CD4-positive, alpha-beta memory T cell (primary cell): ENCODE measurements at regions of chr2 and their contacts with region 1.

Region 1: GRCh38 chr2:37389989-37390765 is 45.7 kb downstream of the QPCT start:
- DNase-seq: peak; percentile 61 to 90 (median 66)
- H3K4me3 ChIP-seq: peak overlapping the region in 1 of 2 donors; percentile 4
- H3K4me3 Mint-ChIP-seq: peak overlapping the region; percentile 28 to 78 (median 57)
- H3K27ac ChIP-seq: peak overlapping the region; percentile 38
- H3K27ac Mint-ChIP-seq: peak overlapping the region in 4 of 7 donors; percentile 62 to 94 (median 88)
- H3K4me1 ChIP-seq: peaks cover 29% of the 10 kb centered on the region
- H3K4me1 Mint-ChIP-seq: peaks cover 2 to 7% (median 3%) of the 10 kb centered on the region in 4 donors
- H3K27me3 ChIP-seq: no peaks in the 10 kb centered on the region
- H3K27me3 Mint-ChIP-seq: no peaks in the 10 kb centered on the region

Region 2: DNA sequence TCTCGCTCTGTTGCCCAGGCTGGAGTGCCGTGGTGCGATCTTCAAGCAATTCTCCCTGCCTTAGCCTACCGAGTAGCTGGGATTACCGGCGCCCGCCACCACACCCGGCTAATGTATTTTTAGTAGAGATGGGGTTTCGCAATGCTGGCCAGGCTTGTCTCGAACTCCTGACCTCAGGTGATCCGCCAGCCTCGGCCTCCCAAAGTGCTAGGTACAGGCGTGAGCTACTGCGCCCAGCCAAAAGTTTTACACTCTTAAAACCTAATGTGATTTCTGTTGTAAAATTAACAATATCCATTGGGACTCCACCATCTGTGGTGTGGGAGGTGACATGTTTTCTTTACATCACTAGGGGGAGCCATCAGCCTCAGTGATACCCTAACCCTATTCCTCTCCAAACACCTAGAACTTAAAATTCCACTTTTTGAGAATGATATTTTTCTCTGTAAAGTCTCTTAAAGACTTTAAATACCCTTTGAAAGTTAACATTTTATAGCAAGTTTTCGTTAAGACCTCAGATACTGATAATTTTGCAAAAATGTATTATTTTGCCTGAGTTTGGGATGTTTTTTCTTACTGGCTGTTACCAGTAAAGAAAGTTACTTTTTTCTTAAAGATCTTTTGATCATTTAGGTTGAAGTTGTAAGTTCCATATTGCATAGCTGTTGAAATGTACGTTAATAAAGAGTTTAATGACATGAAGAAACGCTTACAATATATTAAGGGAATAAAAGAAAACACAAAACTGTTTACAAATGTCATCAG is 221.8 kb before region 1 on chr2:
- CTCF ChIA-PET with region 1: interaction called, 8 read pairs
- POLR2A ChIA-PET with region 1: no interaction called
- intact Hi-C with region 1: loop called (anchors 10 kb)
- DNase-seq: peak in 4 of 5 donors; percentile 32 to 45 (median 36)
- H3K4me3 ChIP-seq: no peak overlapping the region
- H3K4me3 Mint-ChIP-seq: no peak overlapping the region
- H3K27ac ChIP-seq: no peak overlapping the region
- H3K27ac Mint-ChIP-seq: no peak overlapping the region
- H3K4me1 ChIP-seq: no peaks in the 10 kb centered on the region
- H3K4me1 Mint-ChIP-seq: no peaks in the 10 kb centered on the region
- H3K27me3 ChIP-seq: no peaks in the 10 kb centered on the region
- H3K27me3 Mint-ChIP-seq: no peaks in the 10 kb centered on the region

Region 3: GRCh38 chr2:37244017-37244416 is 146.2 kb before region 1 on chr2:
- CTCF ChIA-PET with region 1: no interaction called
- POLR2A ChIA-PET with region 1: no interaction called
- intact Hi-C with region 1: no loop called
- DNase-seq: peak in 3 of 5 donors; percentile 6 to 22 (median 16)
- H3K4me3 ChIP-seq: no peak overlapping the region
- H3K4me3 Mint-ChIP-seq: peak overlapping the region in 4 of 8 donors; percentile 22 to 64 (median 50)
- H3K27ac ChIP-seq: peak overlapping the region; percentile 54
- H3K27ac Mint-ChIP-seq: peak overlapping the region in 6 of 7 donors; percentile 62 to 96 (median 88)
- H3K4me1 ChIP-seq: peaks cover 22% of the 10 kb centered on the region
- H3K4me1 Mint-ChIP-seq: peaks cover 8 to 31% (median 24%) of the 10 kb centered on the region in 4 donors
- H3K27me3 ChIP-seq: no peaks in the 10 kb centered on the region
- H3K27me3 Mint-ChIP-seq: no peaks in the 10 kb centered on the region

Region 4: DNA sequence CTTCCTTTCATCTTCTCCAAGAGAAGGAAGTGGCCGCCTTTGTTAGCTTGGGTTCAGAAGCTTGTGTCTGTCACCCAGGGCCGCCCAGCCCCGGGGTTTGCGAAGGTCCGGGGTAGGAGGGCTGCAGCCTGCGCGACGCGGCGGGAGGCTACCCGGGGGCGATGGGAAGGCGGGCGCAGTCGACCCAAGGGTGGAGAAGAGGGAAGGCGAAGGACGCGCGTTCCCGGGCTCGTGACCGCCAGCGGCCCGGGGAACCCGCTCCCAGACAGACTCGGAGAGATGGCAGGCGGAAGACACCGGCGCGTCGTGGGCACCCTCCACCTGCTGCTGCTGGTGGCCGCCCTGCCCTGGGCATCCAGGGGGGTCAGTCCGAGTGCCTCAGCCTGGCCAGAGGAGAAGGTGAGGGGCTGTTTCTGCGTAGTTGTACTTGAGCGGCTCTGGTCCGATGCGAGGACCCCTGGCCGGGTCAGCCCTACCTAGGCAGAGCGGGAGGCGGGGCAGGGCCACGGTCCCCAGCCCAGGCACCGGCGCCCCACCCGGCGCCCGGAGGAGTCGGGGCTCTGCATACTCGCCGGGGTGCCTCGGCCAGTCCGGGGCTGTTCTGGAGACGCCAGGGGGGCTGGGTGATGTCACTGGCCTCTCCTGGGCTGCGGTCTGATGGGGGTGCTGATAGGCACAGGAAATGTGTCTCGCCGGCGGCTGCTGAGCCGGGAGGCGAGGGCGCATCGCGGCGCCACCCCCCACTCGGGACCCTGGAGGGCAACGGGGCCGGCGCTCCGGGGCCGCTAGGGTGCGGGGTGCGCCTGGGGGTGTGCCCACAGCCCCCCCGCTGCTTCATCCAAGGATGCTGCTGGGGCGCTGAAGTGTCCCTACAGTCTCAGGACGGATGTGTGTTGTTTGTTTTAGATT is 45.5 kb before region 1 on chr2 and contains the start of gene QPCT:
- CTCF ChIA-PET with region 1: interaction called, 5 read pairs
- POLR2A ChIA-PET with region 1: no interaction called
- intact Hi-C with region 1: loop called (anchors 5 kb)
- DNase-seq: peak; percentile 36 to 80 (median 50)
- H3K4me3 ChIP-seq: peak within 1 kb of the TSS; percentile 27 to 51
- H3K4me3 Mint-ChIP-seq: peak within 1 kb of the TSS; percentile 62 to 88 (median 84)
- H3K27ac ChIP-seq: no peak within 1 kb of the TSS
- H3K27ac Mint-ChIP-seq: peak within 1 kb of the TSS in 6 of 7 donors; percentile 24 to 75 (median 49)
- H3K4me1 ChIP-seq: peaks cover 12% of the 10 kb centered on the region
- H3K4me1 Mint-ChIP-seq: peaks cover 7 to 12% (median 10%) of the 10 kb centered on the region in 4 donors
- H3K27me3 ChIP-seq: no peaks in the 10 kb centered on the region
- H3K27me3 Mint-ChIP-seq: peaks cover 2 to 5% of the 10 kb centered on the region in 2 donors
- total RNA-seq, gene QPCT: 1.2 to 1.4 TPM

Region 5: DNA sequence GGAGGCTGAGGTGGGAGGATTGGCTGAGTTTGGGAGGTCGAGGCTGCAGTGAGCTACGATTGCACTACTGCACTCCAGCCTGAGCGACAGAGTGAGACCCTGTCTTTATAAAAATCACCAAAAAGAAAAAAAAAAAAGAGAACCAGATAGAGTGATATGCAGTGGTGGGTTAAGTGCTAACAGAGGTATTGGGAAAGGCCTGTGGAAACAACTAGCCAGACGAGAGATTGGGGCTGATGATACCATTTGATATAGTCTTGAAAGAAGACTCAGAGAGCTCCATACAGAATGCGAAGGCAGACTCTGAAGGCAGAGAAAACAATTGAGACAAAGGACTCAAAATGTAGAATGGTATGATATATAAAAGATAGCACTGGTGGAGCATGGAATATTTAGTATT is 147.1 kb after region 1 on chr2:
- CTCF ChIA-PET with region 1: no interaction called
- POLR2A ChIA-PET with region 1: no interaction called
- intact Hi-C with region 1: loop called (anchors 5 kb)
- DNase-seq: no peak
- H3K4me3 ChIP-seq: no peak overlapping the region
- H3K4me3 Mint-ChIP-seq: no peak overlapping the region
- H3K27ac ChIP-seq: no peak overlapping the region
- H3K27ac Mint-ChIP-seq: no peak overlapping the region
- H3K4me1 ChIP-seq: no peaks in the 10 kb centered on the region
- H3K4me1 Mint-ChIP-seq: peaks cover 0 to 5% (median under 1%) of the 10 kb centered on the region in 4 donors
- H3K27me3 ChIP-seq: no peaks in the 10 kb centered on the region
- H3K27me3 Mint-ChIP-seq: peaks cover 0 to 1% of the 10 kb centered on the region in 2 donors

Region 6: GRCh38 chr2:37877457-37878315 is 487.5 kb after region 1 on chr2:
- CTCF ChIA-PET with region 1: interaction called, 288 read pairs
- POLR2A ChIA-PET with region 1: no interaction called
- intact Hi-C with region 1: no loop called
- DNase-seq: peak in 4 of 5 donors; percentile 45 to 57 (median 52)
- H3K4me3 ChIP-seq: no peak overlapping the region
- H3K4me3 Mint-ChIP-seq: no peak overlapping the region
- H3K27ac ChIP-seq: no peak overlapping the region
- H3K27ac Mint-ChIP-seq: no peak overlapping the region
- H3K4me1 ChIP-seq: no peaks in the 10 kb centered on the region
- H3K4me1 Mint-ChIP-seq: no peaks in the 10 kb centered on the region
- H3K27me3 ChIP-seq: no peaks in the 10 kb centered on the region
- H3K27me3 Mint-ChIP-seq: peaks cover 2 to 7% of the 10 kb centered on the region in 2 donors

Region 7: GRCh38 chr2:37890893-37891495 is 500.8 kb after region 1 on chr2:
- CTCF ChIA-PET with region 1: interaction called, 25 read pairs
- POLR2A ChIA-PET with region 1: no interaction called
- intact Hi-C with region 1: loop called (anchors 5 kb)
- DNase-seq: peak; percentile 40 to 51 (median 47)
- H3K4me3 ChIP-seq: no peak overlapping the region
- H3K4me3 Mint-ChIP-seq: peak overlapping the region in 3 of 8 donors; percentile 22 to 79 (median 51)
- H3K27ac ChIP-seq: no peak overlapping the region
- H3K27ac Mint-ChIP-seq: peak overlapping the region in 1 of 7 donors; percentile 25
- H3K4me1 ChIP-seq: peaks cover 34% of the 10 kb centered on the region
- H3K4me1 Mint-ChIP-seq: peaks cover 35 to 45% (median 37%) of the 10 kb centered on the region in 4 donors
- H3K27me3 ChIP-seq: no peaks in the 10 kb centered on the region
- H3K27me3 Mint-ChIP-seq: peaks cover 3 to 5% of the 10 kb centered on the region in 2 donors